WTC11 (cell line): ENCODE measurements at regions of chr11 and their contacts with region 1.

Region 1: GRCh38 chr11:114774599-114775361 is 96.5 kb downstream of the NXPE2 start:
- DNase-seq: peak; percentile 81
- ATAC-seq: peak; percentile 90
- H3K4me3 Mint-ChIP-seq: no peak overlapping the region
- H3K27ac Mint-ChIP-seq: no peak overlapping the region
- H3K4me1 Mint-ChIP-seq: peaks cover 27% of the 10 kb centered on the region
- H3K27me3 Mint-ChIP-seq: peaks cover 47% of the 10 kb centered on the region
- CTCF ChIP-seq: peak; percentile 96

Region 2: GRCh38 chr11:114738954-114739353 is 35.8 kb before region 1 on chr11:
- CTCF ChIA-PET with region 1: interaction called, 10 read pairs
- POLR2A ChIA-PET with region 1: no interaction called
- DNase-seq: peak; percentile 62
- ATAC-seq: peak; percentile 41; the same call in 1 of the 2 replicates
- H3K4me3 Mint-ChIP-seq: no peak overlapping the region
- H3K27ac Mint-ChIP-seq: no peak overlapping the region
- H3K4me1 Mint-ChIP-seq: peaks cover 10% of the 10 kb centered on the region
- H3K27me3 Mint-ChIP-seq: no peaks in the 10 kb centered on the region
- CTCF ChIP-seq: peak; percentile 25; the same call in 1 of the 2 replicates

Region 3: GRCh38 chr11:114785820-114786219 is 11.0 kb after region 1 on chr11:
- CTCF ChIA-PET with region 1: interaction called, 19 read pairs
- POLR2A ChIA-PET with region 1: no interaction called
- DNase-seq: no peak
- ATAC-seq: no peak
- H3K4me3 Mint-ChIP-seq: no peak overlapping the region
- H3K27ac Mint-ChIP-seq: no peak overlapping the region
- H3K4me1 Mint-ChIP-seq: peaks cover 14% of the 10 kb centered on the region
- H3K27me3 Mint-ChIP-seq: no peaks in the 10 kb centered on the region
- CTCF ChIP-seq: no peak

Region 4: DNA sequence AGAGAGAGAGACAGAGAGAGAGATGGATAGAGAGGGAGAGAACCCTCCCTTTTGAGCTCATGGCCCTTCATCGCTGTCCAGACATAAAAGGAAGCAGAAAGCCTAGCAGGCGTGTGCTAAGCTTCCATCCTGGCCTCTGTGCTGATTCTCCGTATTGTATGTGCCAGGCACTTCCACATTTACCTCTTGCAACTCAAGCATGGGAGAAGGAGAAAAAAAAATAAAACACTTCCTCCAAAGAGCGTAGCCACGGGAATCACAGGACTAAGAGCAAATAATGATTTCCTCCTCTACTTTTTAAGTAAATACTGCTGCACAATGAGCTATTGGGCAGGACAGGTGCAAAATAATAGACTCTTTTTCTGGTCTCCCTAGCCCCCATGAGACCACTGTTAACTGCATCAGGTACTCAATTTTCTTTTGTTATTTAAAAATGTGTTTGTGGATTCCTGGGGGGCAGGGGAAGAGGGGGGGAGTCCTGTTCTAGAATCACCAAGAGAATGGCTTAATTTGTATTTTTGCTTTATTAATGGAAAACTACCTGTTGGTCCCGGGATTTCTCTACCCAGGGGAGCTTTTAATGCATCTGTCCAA is 57.8 kb after region 1 on chr11:
- CTCF ChIA-PET with region 1: interaction called, 10 read pairs
- POLR2A ChIA-PET with region 1: no interaction called
- DNase-seq: no peak
- ATAC-seq: peak; percentile 66
- H3K4me3 Mint-ChIP-seq: peak overlapping the region; percentile 9; the same call in 1 of the 2 replicates
- H3K27ac Mint-ChIP-seq: peak overlapping the region; percentile 32; the same call in 1 of the 2 replicates
- H3K4me1 Mint-ChIP-seq: peaks cover 8% of the 10 kb centered on the region
- H3K27me3 Mint-ChIP-seq: peaks cover 29% of the 10 kb centered on the region
- CTCF ChIP-seq: no peak

Region 5: DNA sequence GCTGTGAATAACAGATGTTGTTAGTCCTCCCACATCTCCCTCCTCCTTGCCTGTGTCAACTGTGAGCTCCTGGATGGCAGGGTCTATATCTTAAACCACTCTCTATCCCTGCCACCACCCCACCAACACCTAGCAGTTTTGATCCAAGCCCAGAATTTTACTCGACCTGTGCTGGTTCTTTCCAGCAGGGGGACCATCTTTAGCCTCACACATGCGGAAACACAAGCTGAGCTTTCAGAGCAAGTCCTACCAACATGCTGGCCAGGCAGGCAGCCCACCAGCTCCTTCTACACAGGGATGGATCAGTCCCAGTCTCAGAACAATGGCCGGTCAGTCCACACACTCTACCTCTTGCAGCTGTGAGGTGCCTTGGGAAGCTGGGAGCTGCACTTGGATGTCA is 135.1 kb after region 1 on chr11:
- CTCF ChIA-PET with region 1: interaction called, 12 read pairs
- POLR2A ChIA-PET with region 1: no interaction called
- DNase-seq: peak; percentile 15
- ATAC-seq: peak; percentile 83
- H3K4me3 Mint-ChIP-seq: no peak overlapping the region
- H3K27ac Mint-ChIP-seq: no peak overlapping the region
- H3K4me1 Mint-ChIP-seq: no peaks in the 10 kb centered on the region
- H3K27me3 Mint-ChIP-seq: peaks cover 6% of the 10 kb centered on the region
- CTCF ChIP-seq: peak; percentile 28; the same call in 1 of the 2 replicates

Region 6: GRCh38 chr11:114953039-114953438 is 178.3 kb after region 1 on chr11:
- CTCF ChIA-PET with region 1: interaction called, 10 read pairs
- POLR2A ChIA-PET with region 1: no interaction called
- DNase-seq: no peak
- ATAC-seq: peak; percentile 85
- H3K4me3 Mint-ChIP-seq: no peak overlapping the region
- H3K27ac Mint-ChIP-seq: no peak overlapping the region
- H3K4me1 Mint-ChIP-seq: no peaks in the 10 kb centered on the region
- H3K27me3 Mint-ChIP-seq: no peaks in the 10 kb centered on the region; the same call in 1 of the 2 replicates
- CTCF ChIP-seq: no peak